Transverse colon (tissue), 4 donors: ENCODE measurements at regions of chr6 and their contacts with region 1.

Region 1: DNA sequence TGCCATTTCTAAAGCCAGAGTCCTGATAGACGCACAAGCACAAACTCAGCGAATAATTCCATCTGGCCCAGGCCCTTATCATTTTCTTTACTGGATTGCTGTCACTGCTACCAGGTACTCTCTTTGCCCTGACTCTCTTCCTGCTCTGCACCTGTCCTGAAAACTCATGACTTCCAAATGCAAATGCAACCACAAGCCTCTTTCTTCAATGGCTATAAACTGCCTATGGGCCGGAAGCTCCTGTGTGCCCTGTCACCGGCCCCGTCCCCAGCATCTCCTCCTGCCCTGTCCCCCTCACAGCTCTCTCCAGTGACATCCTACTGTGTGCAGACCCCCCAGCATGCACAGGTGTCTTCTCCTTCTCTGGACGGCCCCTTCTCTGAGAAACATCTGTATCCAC is 302.6 kb downstream of the GMDS start:
- DNase-seq: no peak
- H3K4me3 ChIP-seq: no peak overlapping the region
- H3K27ac ChIP-seq: no peak overlapping the region
- H3K4me1 ChIP-seq: no peaks in the 10 kb centered on the region
- H3K27me3 ChIP-seq: no peaks in the 10 kb centered on the region
- CTCF ChIP-seq: no peak
- EP300 ChIP-seq: no peak
- POLR2A ChIP-seq: no peak

Region 2: GRCh38 chr6:1908776-1909175 is 34.1 kb before region 1 on chr6:
- in situ Hi-C with region 1: no loop called
- intact Hi-C with region 1: loop called (anchors 1 kb)
- DNase-seq: no peak
- H3K4me3 ChIP-seq: no peak overlapping the region
- H3K27ac ChIP-seq: no peak overlapping the region
- H3K4me1 ChIP-seq: no peaks in the 10 kb centered on the region
- H3K27me3 ChIP-seq: no peaks in the 10 kb centered on the region
- CTCF ChIP-seq: no peak
- EP300 ChIP-seq: no peak
- POLR2A ChIP-seq: no peak

Region 3: GRCh38 chr6:2684059-2684749 is 741.4 kb after region 1 on chr6:
- in situ Hi-C with region 1: no loop called
- intact Hi-C with region 1: no loop called
- DNase-seq: no peak
- H3K4me3 ChIP-seq: no peak overlapping the region
- H3K27ac ChIP-seq: no peak overlapping the region
- H3K4me1 ChIP-seq: no peaks in the 10 kb centered on the region
- H3K27me3 ChIP-seq: no peaks in the 10 kb centered on the region
- CTCF ChIP-seq: no peak
- EP300 ChIP-seq: no peak
- POLR2A ChIP-seq: no peak